Posterior vena cava (tissue), 2 donors: ENCODE measurements at regions of chr9 and their contacts with region 1.

Region 1: GRCh38 chr9:131478421-131478868 is 24.3 kb upstream of the POMT1 start:
- DNase-seq: no peak

Region 2: DNA sequence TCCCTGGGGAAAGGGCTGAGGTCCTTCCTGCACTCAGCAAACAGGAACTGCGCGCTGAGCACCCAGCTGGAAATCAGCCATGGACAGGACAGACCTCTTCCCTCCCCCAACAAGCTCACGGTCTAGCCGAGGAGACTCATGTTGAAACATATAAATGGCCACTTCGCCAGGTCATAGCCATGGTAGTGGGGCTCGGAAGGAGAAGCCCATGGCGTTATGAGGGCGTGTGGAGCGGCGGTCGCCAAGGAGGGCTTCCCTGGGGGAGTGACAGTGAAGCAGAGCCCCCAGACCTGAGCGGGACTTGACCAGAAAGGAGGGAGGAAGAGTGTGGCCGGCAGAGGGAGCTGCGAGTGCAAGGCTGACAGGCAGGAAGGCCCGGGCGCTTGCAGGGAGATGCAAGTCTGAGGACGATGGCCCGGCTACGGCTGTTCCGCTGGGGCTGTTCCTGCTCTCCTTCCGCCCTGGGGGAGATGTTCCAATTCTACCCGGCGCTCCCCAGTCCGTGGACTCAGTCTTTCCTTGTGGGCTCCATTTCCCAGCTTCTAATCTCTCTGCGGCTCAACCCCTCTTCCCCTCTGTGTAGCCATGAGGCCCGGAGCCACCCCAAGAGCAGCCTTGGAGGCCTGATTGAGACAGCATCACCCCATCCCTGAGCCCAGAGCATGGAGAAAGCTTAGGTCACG is 128.4 kb before region 1 on chr9:
- intact Hi-C with region 1: loop called (anchors 10 kb)
- DNase-seq: peak; percentile 97

Region 3: DNA sequence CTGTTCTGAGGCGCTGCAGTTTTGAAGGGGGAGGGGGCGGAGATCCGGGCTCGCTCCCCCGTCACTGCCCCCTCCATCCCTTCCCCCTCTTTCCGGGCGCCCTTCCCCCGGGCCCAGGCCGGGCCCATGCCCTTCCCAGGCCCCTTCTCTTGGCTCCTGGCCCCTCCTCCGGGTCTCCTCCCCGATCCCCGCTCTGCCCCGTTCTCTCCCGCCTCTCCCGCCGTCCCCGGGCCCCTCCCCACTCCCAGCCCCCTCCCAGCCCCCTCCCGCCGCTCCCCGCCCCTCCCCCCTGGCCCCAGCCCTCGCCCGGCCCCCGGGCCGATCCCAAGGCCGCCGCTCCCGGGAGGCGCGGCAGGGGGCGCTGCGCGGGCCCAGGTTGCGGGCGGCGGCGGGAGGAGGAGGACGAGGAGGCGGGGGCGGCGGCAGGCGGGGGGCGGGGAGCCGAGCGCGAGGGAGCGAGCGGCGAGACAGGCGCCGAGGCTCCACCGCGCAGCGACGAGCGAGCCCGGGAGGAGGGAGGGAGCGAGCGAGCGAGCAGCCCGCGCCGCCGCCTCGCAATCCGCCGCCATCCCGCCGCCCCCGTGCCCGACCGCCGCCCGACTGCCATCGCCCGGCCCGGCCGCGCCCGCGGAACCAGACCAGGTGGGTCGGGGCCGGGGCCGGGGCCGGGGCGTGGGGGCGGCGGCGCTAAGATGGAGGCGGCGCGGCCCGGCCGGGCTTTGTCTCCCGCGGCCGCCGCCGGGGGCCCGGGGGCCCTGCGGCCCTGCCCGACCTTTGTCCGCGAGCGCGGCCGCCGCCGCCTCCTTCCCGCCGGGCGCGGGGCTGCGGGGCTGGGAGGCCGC is 84.6 kb before region 1 on chr9 and contains the start of gene PRRC2B:
- intact Hi-C with region 1: loop called in 1 of 2 experiments (anchors 10 kb)
- DNase-seq: peak; percentile 96
- total RNA-seq, gene PRRC2B: 148 to 151 TPM

Region 4: GRCh38 chr9:131546336-131547084 is 68.1 kb after region 1 on chr9:
- intact Hi-C with region 1: no loop called
- DNase-seq: peak; percentile 69